Ascending aorta (tissue), 2 donors: ENCODE measurements at regions of chr21 and their contacts with region 1.

Region 1: GRCh38 chr21:41612674-41613532 is 104.9 kb upstream of the TMPRSS2 start:
- DNase-seq: peak; percentile 80 to 97
- H3K4me3 ChIP-seq: no peak overlapping the region
- H3K27ac ChIP-seq: peak overlapping the region; percentile 94 to 98
- H3K4me1 ChIP-seq: peaks cover 31 to 53% of the 10 kb centered on the region in 2 donors
- H3K27me3 ChIP-seq: no peaks in the 10 kb centered on the region
- CTCF ChIP-seq: peak; percentile 87 to 89 (median 87)

Region 2: GRCh38 chr21:41247561-41248284 is 365.2 kb before region 1 on chr21:
- intact Hi-C with region 1: loop called (anchors 10 kb)
- DNase-seq: peak; percentile 78 to 94
- H3K4me3 ChIP-seq: peak overlapping the region; percentile 36 to 45
- H3K27ac ChIP-seq: peak overlapping the region; percentile 85 to 92
- H3K4me1 ChIP-seq: peaks cover 25 to 43% of the 10 kb centered on the region in 2 donors
- H3K27me3 ChIP-seq: no peaks in the 10 kb centered on the region
- CTCF ChIP-seq: no peak

Region 3: GRCh38 chr21:41663801-41664788 is 51.2 kb after region 1 on chr21:
- intact Hi-C with region 1: loop called (anchors 1 kb)
- DNase-seq: no peak
- H3K4me3 ChIP-seq: no peak overlapping the region
- H3K27ac ChIP-seq: peak overlapping the region; percentile 37 to 50
- H3K4me1 ChIP-seq: peaks cover 4 to 18% of the 10 kb centered on the region in 2 donors
- H3K27me3 ChIP-seq: no peaks in the 10 kb centered on the region
- CTCF ChIP-seq: no peak

Region 4: GRCh38 chr21:41777951-41778874 is 165.3 kb after region 1 on chr21:
- intact Hi-C with region 1: loop called (anchors 1 kb)
- DNase-seq: peak; percentile 59 to 95
- H3K4me3 ChIP-seq: peak overlapping the region; percentile 37 to 51
- H3K27ac ChIP-seq: peak overlapping the region; percentile 64 to 79
- H3K4me1 ChIP-seq: peaks cover 0 to 3% of the 10 kb centered on the region in 2 donors
- H3K27me3 ChIP-seq: no peaks in the 10 kb centered on the region
- CTCF ChIP-seq: peak; percentile 89 to 97 (median 95)

Region 5: DNA sequence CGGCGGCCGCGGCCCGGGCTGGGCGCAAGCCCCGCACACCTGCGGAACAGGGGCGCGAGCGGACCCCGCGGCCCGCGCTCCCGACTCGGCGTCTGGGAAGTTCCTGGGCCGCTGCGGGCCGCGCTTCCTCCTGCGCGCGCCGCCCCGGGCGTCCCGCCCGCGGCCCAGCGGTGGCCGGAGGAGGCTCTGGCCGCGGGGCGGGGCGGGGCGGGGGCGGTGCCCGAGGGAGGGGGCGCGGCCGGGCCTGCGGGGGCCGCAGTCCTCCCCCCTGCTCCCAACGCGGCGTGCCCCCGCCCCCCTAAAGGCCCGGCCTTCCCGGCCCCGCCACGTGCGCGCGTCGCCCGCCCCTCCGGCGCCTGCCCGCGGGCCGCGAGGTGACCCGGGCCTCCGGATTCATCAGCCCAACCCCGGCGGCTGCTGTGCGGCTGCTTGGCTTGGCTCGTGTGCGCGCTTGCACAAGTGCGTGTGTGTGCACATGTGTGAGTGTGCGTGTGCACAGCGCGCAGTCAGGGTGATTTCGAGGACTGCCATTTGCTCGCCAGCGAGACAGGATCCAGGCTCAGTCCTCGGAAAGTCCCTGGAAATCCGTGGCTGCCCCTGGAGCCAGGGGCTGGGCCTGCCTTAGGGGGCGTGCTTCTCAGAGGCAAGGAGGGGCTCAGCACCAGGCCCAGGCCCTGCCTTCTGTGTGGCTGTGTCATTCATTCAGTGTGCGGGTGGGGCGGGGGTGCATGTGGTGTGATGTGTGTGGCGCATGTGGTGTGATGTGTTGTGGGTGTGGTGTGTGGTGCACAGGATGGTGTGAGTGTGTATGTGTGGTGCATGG is 341.1 kb after region 1 on chr21 and contains the start of gene C2CD2:
- intact Hi-C with region 1: loop called (anchors 5 kb)
- DNase-seq: peak in 1 of 2 donors; percentile 83
- H3K4me3 ChIP-seq: peak within 1 kb of the TSS; percentile 96 to 97
- H3K27ac ChIP-seq: peak within 1 kb of the TSS; percentile 86 to 90
- H3K4me1 ChIP-seq: peaks cover 14 to 29% of the 10 kb centered on the region in 2 donors
- H3K27me3 ChIP-seq: no peaks in the 10 kb centered on the region
- CTCF ChIP-seq: no peak
- total RNA-seq, gene C2CD2: 45.0 TPM

Region 6: GRCh38 chr21:42097860-42098454 is 485.1 kb after region 1 on chr21:
- intact Hi-C with region 1: loop called (anchors 1 kb)
- DNase-seq: peak; percentile 82 to 93
- H3K4me3 ChIP-seq: peak overlapping the region in 1 of 2 donors; percentile 5
- H3K27ac ChIP-seq: peak overlapping the region; percentile 87 to 91
- H3K4me1 ChIP-seq: peaks cover 21 to 45% of the 10 kb centered on the region in 2 donors
- H3K27me3 ChIP-seq: no peaks in the 10 kb centered on the region
- CTCF ChIP-seq: no peak